ENCODE measurements at regions of chr9 and their contacts with region 1.

Region 1: DNA sequence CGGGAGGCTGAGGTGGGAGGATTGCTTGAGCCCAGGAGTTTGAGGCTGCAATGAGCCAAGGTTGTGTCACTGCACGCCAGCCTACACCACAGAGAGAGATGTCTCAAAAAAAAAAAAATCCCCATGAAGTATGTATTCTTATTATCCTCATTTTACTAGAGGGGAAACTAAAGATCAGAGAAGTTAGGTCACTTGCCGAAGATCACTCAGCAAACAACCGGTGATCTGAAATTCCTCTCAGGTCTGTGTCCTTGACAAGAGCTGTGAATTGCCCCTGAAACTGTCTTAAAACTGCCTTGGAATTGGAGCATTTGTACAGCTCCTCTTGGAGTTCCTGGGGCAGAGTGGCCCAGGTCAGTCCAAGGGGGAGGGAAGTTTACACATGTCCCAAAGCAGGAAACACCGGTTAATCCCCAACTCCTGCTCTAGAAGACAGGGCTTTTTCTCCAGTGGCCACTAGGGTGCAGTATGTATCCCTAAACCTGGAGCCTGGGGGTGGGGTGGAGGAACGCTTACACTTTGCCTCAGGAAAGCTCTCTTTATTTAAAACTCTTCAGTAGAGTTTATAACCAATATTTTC is 27.6 kb downstream of the AQP7 start:
- DNase-seq: peak; percentile 70
- H3K4me3 Mint-ChIP-seq: no peak overlapping the region
- H3K27ac Mint-ChIP-seq: peak overlapping the region; percentile 33
- H3K4me1 Mint-ChIP-seq: peaks cover 14% of the 10 kb centered on the region
- H3K27me3 Mint-ChIP-seq: no peaks in the 10 kb centered on the region

Region 2: GRCh38 chr9:33354651-33355211 is 20.0 kb before region 1 on chr9:
- CTCF ChIA-PET with region 1: interaction called, 15 read pairs
- POLR2A ChIA-PET with region 1: no interaction called
- DNase-seq: no peak
- H3K4me3 Mint-ChIP-seq: no peak overlapping the region
- H3K27ac Mint-ChIP-seq: no peak overlapping the region
- H3K4me1 Mint-ChIP-seq: peaks cover 11% of the 10 kb centered on the region
- H3K27me3 Mint-ChIP-seq: no peaks in the 10 kb centered on the region

Region 3: DNA sequence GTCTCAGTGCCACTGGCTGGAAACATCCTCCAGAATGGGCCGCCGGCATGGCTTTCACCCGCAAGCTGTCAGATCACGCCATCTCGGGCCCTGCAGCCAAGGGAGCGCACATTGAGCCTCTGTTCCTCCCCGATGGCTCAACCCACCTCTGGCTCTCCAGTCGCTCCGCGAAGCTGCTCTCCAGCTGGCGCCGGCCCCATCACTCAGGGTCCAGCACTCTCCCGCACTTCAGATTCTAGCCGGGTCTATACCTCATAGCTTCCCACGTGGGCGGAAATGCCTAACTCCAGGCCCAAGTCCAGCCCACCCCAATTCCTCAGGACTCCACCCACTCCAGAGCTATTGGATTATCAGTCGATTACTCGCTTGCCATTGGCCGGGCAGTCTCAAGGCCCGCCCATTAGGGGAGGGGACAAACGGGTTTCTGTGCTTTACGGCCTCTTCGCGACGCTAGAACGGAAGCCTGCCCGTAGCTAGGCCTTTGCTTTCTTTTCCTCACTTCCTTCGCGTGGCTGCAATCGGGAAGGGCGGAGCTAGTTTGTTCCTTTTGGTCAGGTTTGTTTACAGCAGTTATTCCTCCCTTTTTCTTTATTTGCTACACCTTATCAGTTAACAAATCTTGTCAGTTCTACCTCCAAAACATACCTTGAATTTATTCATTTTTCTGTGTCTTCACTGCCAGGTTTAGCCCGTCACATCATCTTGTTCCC is 99.1 kb after region 1 on chr9 and contains the start of gene NOL6:
- CTCF ChIA-PET with region 1: interaction called, 33 read pairs
- POLR2A ChIA-PET with region 1: no interaction called
- DNase-seq: peak; percentile 98
- H3K4me3 Mint-ChIP-seq: peak within 1 kb of the TSS; percentile 92
- H3K27ac Mint-ChIP-seq: peak within 1 kb of the TSS; percentile 85
- H3K4me1 Mint-ChIP-seq: peaks cover 30% of the 10 kb centered on the region
- H3K27me3 Mint-ChIP-seq: no peaks in the 10 kb centered on the region
- total RNA-seq, gene NOL6: 21.6 to 22.4 TPM